GM10248 (cell line): ENCODE measurements at regions of chr11 and their contacts with region 1.

Region 1: DNA sequence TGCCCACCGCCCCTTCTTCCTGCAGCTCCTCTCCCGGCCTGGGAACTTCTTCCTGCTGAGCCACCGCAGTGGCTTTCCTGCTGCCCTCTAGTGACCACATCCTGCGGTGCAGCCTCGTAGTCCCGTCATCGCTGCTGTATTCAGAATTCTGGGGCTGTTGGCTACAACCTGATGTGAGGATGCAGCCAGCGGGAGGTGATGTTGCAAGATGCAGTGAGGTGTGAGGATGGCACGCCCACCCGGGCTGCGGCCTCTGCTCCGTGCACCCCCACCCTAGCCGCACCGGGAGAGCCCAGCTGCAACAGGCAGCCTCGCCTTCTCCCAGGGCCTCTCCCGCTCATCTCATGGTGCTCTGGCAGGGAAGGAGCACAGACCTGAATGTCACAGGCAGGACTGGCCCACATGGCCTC is 10.1 kb downstream of the CHST1 start:
- DNase-seq: peak; percentile 81
- CTCF ChIP-seq: peak; percentile 98

Region 2: DNA sequence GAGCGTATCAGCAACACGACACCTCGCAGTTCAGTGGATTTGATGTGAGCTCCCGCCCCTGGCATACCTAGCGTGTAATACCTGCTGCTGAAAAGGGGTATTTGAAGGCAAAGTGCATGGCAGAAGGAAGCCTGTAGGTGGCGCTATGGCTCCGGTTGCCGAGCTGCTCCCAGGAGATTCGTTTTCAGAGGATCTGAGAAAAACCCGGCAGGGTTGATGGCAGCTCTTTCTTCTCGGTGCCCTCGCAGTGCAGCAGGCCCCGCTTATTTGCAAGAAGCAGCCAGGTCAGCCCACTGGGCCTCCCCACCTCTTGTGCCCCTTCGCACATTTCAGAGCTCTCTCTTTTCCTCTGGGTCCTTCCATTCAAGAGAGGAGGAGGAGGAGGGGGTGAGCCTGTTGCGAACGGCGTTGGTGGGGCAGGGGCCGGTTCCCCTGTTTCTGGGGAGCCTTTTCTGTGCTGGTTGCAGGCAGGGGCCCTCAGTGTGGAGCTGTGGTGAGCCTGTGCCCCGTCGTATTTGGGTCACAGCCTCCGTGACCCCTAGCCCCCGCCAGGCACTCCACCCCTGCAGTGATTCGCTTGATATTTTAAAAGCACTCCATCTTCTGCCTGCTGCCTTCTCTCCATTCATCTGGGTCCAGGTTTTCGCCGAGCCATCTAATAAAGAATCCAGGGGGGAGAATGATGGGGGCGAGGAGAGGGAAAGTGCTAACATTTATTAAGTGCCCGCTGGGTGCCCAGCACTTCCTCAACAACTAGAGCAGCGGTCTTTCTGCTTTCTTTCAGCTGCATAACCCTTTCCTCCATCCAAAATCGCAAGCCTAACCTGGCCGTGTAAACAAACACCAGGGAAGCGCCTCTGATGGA is 283.9 kb before region 1 on chr11:
- CTCF ChIA-PET with region 1: interaction called, 33 read pairs
- POLR2A ChIA-PET with region 1: no interaction called
- DNase-seq: peak; percentile 76
- CTCF ChIP-seq: peak; percentile 79

Region 3: GRCh38 chr11:45638051-45638450 is 17.3 kb before region 1 on chr11:
- CTCF ChIA-PET with region 1: interaction called, 25 read pairs
- POLR2A ChIA-PET with region 1: interaction called, 3 read pairs
- DNase-seq: no peak
- CTCF ChIP-seq: no peak

Region 4: DNA sequence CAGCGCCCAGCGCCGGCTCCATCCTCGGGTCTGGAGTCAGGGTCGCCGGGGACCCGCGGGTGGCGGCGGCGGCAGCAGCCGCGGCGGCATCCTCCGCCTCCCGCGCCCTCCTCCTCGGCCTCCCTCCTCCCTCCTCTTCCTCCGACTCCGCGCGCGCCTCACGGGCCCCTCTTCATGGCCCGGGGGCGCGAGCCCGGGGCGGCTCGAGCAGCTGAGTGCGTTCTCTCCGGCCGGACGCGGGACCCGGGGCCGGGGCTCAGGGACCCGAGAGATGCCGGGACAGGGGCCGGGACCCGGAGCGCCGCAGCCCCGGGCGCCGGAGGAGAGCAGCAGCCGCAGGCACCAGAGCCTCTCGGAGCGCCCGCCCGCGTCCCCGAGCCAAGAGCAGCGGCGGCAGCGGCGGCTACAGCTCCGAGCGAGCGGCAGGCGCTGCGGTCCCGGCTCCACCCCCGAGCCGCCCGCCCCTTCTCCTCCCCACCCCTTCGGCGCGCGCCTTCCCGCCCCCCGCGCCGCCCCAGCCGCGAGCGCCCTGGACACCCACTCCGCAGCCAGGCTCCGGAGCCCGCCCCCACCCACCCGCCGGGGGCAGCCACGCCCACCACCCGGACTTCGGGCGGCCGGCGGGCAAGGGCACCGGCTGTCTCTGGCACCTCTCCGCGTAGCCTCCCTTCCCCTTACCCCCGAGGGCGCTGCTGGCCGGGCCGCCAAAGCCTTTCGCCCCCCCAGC is 10.0 kb after region 1 on chr11 and contains the start of gene CHST1:
- CTCF ChIA-PET with region 1: interaction called, 27 read pairs
- POLR2A ChIA-PET with region 1: no interaction called
- DNase-seq: no peak
- CTCF ChIP-seq: no peak

Region 5: DNA sequence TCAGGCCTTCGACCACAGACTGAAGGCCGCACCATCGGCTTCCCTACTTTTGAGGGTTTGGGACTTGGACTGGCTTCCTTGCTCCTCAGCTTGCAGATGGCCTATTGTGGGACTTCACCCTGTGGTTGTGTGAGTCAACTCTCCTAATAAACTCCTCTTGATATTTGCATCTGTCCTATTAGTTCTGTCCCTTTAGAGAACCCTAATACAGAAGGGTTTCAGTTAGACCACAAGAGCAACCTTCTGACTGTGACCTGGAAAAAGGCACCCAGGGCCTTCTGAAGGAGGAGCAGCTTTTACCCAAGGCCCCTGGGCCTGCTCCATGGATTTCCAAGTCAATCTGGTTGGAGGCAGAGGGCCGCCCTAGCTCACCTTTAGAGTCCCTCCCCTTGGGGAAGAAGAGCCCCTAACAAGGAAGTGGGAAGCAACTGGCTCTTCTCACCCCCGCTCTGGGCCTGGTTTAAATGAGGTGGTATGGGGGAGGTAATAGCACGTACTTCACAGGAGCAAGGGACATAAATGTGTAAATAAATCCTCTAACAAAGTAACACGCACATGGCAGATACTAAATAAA is 21.3 kb after region 1 on chr11:
- CTCF ChIA-PET with region 1: interaction called, 13 read pairs
- POLR2A ChIA-PET with region 1: no interaction called
- DNase-seq: no peak
- CTCF ChIP-seq: no peak